ENCODE measurements at regions of chr14 and their contacts with region 1.

Region 1: GRCh38 chr14:70640938-70641547 is 673 bp upstream of the TTC9 start:
- DNase-seq: peak in 13 of 14 experiments; percentile 29 to 79 (median 57)
- ATAC-seq: peak; percentile 69
- H3K4me3 ChIP-seq: peak overlapping the region; percentile 57
- H3K4me3 Mint-ChIP-seq: peak overlapping the region; percentile 98
- H3K27ac ChIP-seq: peak overlapping the region; percentile 32 to 71
- H3K27ac Mint-ChIP-seq: peak overlapping the region; percentile 98
- H3K4me1 ChIP-seq: peaks cover 39% of the 10 kb centered on the region
- H3K4me1 Mint-ChIP-seq: peaks cover 58% of the 10 kb centered on the region
- H3K27me3 ChIP-seq: no peaks in the 10 kb centered on the region
- H3K27me3 Mint-ChIP-seq: no peaks in the 10 kb centered on the region
- CTCF ChIP-seq: no peak

Region 2: DNA sequence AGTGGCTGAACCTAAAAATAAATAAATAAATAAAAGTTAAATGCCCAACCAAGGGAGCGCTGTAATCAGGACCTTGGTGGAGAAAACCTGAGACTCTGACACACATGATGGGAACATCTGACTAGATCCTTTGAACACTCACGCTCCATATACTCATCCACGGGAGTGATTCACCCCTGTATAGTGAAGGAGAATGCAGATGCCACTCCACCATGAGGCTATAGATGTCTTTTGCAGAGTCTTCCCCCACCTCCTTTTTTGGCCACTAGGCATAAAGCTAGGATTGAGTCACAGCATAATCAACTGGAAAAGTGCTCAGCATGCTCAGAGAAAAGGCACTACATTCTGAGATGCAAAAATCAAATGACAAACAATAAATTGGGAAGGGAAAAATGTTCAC is 125.2 kb before region 1 on chr14:
- CTCF ChIA-PET with region 1: no interaction called
- POLR2A ChIA-PET with region 1: no interaction called
- intact Hi-C with region 1: no loop called
- DNase-seq: no peak
- ATAC-seq: no peak
- H3K4me3 ChIP-seq: no peak overlapping the region
- H3K4me3 Mint-ChIP-seq: no peak overlapping the region
- H3K27ac ChIP-seq: no peak overlapping the region
- H3K27ac Mint-ChIP-seq: no peak overlapping the region
- H3K4me1 ChIP-seq: no peaks in the 10 kb centered on the region
- H3K4me1 Mint-ChIP-seq: peaks cover 7% of the 10 kb centered on the region
- H3K27me3 ChIP-seq: no peaks in the 10 kb centered on the region
- H3K27me3 Mint-ChIP-seq: no peaks in the 10 kb centered on the region
- CTCF ChIP-seq: no peak

Region 3: DNA sequence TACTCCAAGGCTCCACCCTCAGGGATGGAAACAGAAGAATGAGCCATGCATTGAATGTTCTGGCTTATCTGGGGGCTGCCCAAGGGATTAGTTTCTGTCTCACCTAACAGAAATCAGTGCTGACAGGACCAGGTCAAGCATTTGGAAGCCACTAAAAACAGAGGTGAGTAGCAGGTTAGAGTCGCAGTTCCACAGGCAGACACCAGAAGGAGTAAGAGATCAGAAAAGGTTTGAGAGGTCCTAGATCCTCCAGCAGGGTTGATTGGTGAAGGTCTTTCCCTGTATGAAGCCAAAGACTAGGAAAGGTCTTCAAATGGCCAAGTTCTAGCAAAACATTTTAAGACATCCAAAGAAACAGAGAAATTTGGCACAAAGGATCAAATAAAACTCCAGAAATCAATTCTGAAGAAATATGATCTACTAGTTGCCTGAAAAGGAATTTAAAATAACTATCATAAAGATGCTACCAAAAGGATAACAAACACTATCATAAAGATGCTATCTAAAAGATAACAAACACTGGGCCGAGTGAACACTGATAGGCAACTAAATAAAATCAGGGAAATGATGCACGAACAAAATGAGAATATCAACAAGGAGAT is 18.8 kb before region 1 on chr14:
- CTCF ChIA-PET with region 1: interaction called, 3 read pairs
- POLR2A ChIA-PET with region 1: interaction called, 4 read pairs
- intact Hi-C with region 1: loop called in 1 of 2 experiments (anchors 1 kb)
- DNase-seq: peak; percentile 16 to 79 (median 49)
- ATAC-seq: peak; percentile 86
- H3K4me3 ChIP-seq: no peak overlapping the region
- H3K4me3 Mint-ChIP-seq: no peak overlapping the region
- H3K27ac ChIP-seq: no peak overlapping the region
- H3K27ac Mint-ChIP-seq: no peak overlapping the region
- H3K4me1 ChIP-seq: no peaks in the 10 kb centered on the region
- H3K4me1 Mint-ChIP-seq: peaks cover 5% of the 10 kb centered on the region
- H3K27me3 ChIP-seq: no peaks in the 10 kb centered on the region
- H3K27me3 Mint-ChIP-seq: no peaks in the 10 kb centered on the region
- CTCF ChIP-seq: peak; percentile 89

Region 4: GRCh38 chr14:70665191-70665916 is 24.3 kb after region 1 on chr14:
- CTCF ChIA-PET with region 1: interaction called, 18 read pairs
- POLR2A ChIA-PET with region 1: interaction called, 182 read pairs
- intact Hi-C with region 1: loop called in 1 of 2 experiments (anchors 2 kb)
- DNase-seq: no peak
- ATAC-seq: no peak
- H3K4me3 ChIP-seq: no peak overlapping the region
- H3K4me3 Mint-ChIP-seq: peak overlapping the region; percentile 60
- H3K27ac ChIP-seq: peak overlapping the region in 1 of 2 donors; percentile 6
- H3K27ac Mint-ChIP-seq: peak overlapping the region; percentile 88
- H3K4me1 ChIP-seq: peaks cover 56% of the 10 kb centered on the region
- H3K4me1 Mint-ChIP-seq: peaks cover 66% of the 10 kb centered on the region
- H3K27me3 ChIP-seq: no peaks in the 10 kb centered on the region
- H3K27me3 Mint-ChIP-seq: no peaks in the 10 kb centered on the region
- CTCF ChIP-seq: no peak

Region 5: DNA sequence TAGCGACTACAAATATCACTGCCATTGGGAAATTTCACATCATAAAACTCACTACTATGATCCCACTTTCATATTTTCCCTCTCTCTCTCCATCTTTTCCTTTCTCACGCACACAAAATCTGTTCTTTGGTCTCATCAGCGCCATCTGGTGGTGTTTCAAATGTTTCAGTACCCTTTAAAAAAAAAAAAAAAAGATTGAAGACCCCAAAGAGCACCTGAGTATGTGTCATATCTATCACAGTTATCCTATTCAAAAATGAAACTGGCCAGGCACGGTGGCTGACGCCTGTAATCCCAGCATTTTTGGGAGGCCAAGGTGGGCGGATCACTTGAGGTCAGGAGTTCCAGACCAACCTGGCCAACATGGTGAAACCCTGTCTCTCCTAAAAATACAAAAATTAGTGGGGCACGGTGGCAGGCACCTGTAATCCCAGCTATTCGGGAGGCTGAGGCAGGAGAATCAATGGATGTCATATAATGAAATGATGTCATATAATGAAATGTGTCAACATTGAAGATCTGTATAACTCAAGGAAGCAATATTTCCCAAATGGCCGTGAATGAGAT is 73.1 kb after region 1 on chr14:
- CTCF ChIA-PET with region 1: interaction called, 4 read pairs
- POLR2A ChIA-PET with region 1: interaction called, 6 read pairs
- intact Hi-C with region 1: loop called in 1 of 2 experiments (anchors 5 kb)
- DNase-seq: peak in 12 of 14 experiments; percentile 12 to 84 (median 36)
- ATAC-seq: no peak
- H3K4me3 ChIP-seq: no peak overlapping the region
- H3K4me3 Mint-ChIP-seq: no peak overlapping the region
- H3K27ac ChIP-seq: no peak overlapping the region
- H3K27ac Mint-ChIP-seq: no peak overlapping the region
- H3K4me1 ChIP-seq: peaks cover 5% of the 10 kb centered on the region
- H3K4me1 Mint-ChIP-seq: peaks cover 5% of the 10 kb centered on the region
- H3K27me3 ChIP-seq: no peaks in the 10 kb centered on the region
- H3K27me3 Mint-ChIP-seq: no peaks in the 10 kb centered on the region
- CTCF ChIP-seq: peak; percentile 95

Region 6: GRCh38 chr14:71380271-71380670 is 739.2 kb after region 1 on chr14:
- CTCF ChIA-PET with region 1: no interaction called
- POLR2A ChIA-PET with region 1: no interaction called
- intact Hi-C with region 1: no loop called
- DNase-seq: no peak
- ATAC-seq: no peak
- H3K4me3 ChIP-seq: no peak overlapping the region
- H3K4me3 Mint-ChIP-seq: no peak overlapping the region
- H3K27ac ChIP-seq: no peak overlapping the region
- H3K27ac Mint-ChIP-seq: no peak overlapping the region
- H3K4me1 ChIP-seq: peaks cover 2% of the 10 kb centered on the region
- H3K4me1 Mint-ChIP-seq: peaks cover 35% of the 10 kb centered on the region
- H3K27me3 ChIP-seq: no peaks in the 10 kb centered on the region
- H3K27me3 Mint-ChIP-seq: no peaks in the 10 kb centered on the region
- CTCF ChIP-seq: no peak

Measured in CD4-positive, alpha-beta T cell (primary cell).